ENCODE measurements at regions of chr1 and their contacts with region 1.

Region 1: GRCh38 chr1:226642876-226643576 is 94.5 kb downstream of the STUM start:
- DNase-seq: peak; percentile 91
- ATAC-seq: peak; percentile 88
- H3K4me3 Mint-ChIP-seq: peak overlapping the region; percentile 55
- H3K27ac Mint-ChIP-seq: peak overlapping the region; percentile 95
- H3K4me1 Mint-ChIP-seq: peaks cover 62% of the 10 kb centered on the region
- H3K27me3 Mint-ChIP-seq: no peaks in the 10 kb centered on the region
- CTCF ChIP-seq: no peak

Region 2: DNA sequence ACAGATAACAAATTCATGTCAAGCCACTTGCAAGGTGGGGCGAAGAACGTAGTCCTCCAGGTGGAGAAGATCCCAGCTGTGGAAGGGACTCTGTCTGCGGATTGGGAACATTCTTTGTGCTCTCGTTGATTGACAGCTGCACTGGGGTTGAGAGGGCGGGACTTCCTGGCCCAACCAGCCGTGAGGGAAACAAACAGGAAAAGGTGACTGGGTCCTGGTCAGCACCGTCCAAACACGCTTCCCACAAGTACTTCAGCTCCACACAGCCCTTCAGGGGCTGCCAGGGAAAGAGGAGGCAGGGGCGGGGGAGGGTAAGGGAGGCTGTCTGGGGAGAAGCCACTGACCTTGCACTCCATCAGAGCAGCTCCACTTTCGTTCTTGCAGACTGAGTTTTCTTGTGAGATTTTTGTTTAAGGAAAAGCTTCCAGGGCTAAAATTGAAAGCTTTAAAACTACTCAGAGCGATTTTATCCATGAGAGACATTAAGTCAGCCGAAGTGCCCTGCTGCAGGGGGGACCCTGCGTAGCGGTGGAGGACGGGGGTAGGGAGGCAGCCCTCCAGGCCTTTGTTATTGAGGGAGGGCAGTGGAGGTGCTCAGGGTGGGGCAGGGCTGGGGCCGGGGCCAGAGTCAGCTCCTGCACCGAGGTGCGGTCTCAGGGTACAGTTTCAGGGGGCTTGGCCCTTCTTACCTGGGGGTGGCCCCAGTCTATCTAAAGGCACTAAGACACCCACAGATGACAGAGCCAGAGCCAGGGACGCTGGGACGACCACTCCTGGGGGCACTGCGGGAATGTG is 116.0 kb before region 1 on chr1:
- CTCF ChIA-PET with region 1: no interaction called
- POLR2A ChIA-PET with region 1: no interaction called
- intact Hi-C with region 1: no loop called
- DNase-seq: no peak
- ATAC-seq: no peak
- H3K4me3 Mint-ChIP-seq: no peak overlapping the region
- H3K27ac Mint-ChIP-seq: no peak overlapping the region
- H3K4me1 Mint-ChIP-seq: no peaks in the 10 kb centered on the region
- H3K27me3 Mint-ChIP-seq: peaks cover 8% of the 10 kb centered on the region
- CTCF ChIP-seq: no peak

Region 3: GRCh38 chr1:226568077-226568831 is 74.8 kb before region 1 on chr1:
- CTCF ChIA-PET with region 1: no interaction called
- POLR2A ChIA-PET with region 1: no interaction called
- intact Hi-C with region 1: no loop called
- DNase-seq: no peak
- ATAC-seq: no peak
- H3K4me3 Mint-ChIP-seq: no peak overlapping the region
- H3K27ac Mint-ChIP-seq: no peak overlapping the region
- H3K4me1 Mint-ChIP-seq: no peaks in the 10 kb centered on the region
- H3K27me3 Mint-ChIP-seq: peaks cover 3% of the 10 kb centered on the region
- CTCF ChIP-seq: no peak

Region 4: GRCh38 chr1:226656601-226657277 is 13.7 kb after region 1 on chr1:
- CTCF ChIA-PET with region 1: interaction called, 8 read pairs
- POLR2A ChIA-PET with region 1: interaction called, 17 read pairs
- intact Hi-C with region 1: no loop called
- DNase-seq: peak; percentile 42
- ATAC-seq: peak; percentile 6
- H3K4me3 Mint-ChIP-seq: peak overlapping the region; percentile 24
- H3K27ac Mint-ChIP-seq: no peak overlapping the region
- H3K4me1 Mint-ChIP-seq: peaks cover 65% of the 10 kb centered on the region
- H3K27me3 Mint-ChIP-seq: no peaks in the 10 kb centered on the region
- CTCF ChIP-seq: no peak